Caco-2 (cell line): ENCODE measurements at regions of chr6 and their contacts with region 1.

Region 1: GRCh38 chr6:134888316-134888715 is 61.6 kb downstream of the ALDH8A1 start:
- DNase-seq: no peak
- H3K4me3 ChIP-seq: no peak overlapping the region
- H3K4me3 Mint-ChIP-seq: no peak overlapping the region
- H3K27ac Mint-ChIP-seq: no peak overlapping the region
- H3K4me1 ChIP-seq: no peaks in the 10 kb centered on the region; the same call in 1 of the 2 replicates
- H3K4me1 Mint-ChIP-seq: no peaks in the 10 kb centered on the region
- H3K27me3 ChIP-seq: no peaks in the 10 kb centered on the region
- H3K27me3 Mint-ChIP-seq: no peaks in the 10 kb centered on the region
- CTCF ChIP-seq: no peak

Region 2: GRCh38 chr6:134853111-134854055 is 34.9 kb before region 1 on chr6:
- CTCF ChIA-PET with region 1: no interaction called
- POLR2A ChIA-PET with region 1: no interaction called
- intact Hi-C with region 1: no loop called
- DNase-seq: peak; percentile 20 to 71
- H3K4me3 ChIP-seq: no peak overlapping the region
- H3K4me3 Mint-ChIP-seq: no peak overlapping the region
- H3K27ac Mint-ChIP-seq: no peak overlapping the region
- H3K4me1 ChIP-seq: peaks cover 26% of the 10 kb centered on the region
- H3K4me1 Mint-ChIP-seq: peaks cover 11% of the 10 kb centered on the region
- H3K27me3 ChIP-seq: no peaks in the 10 kb centered on the region
- H3K27me3 Mint-ChIP-seq: no peaks in the 10 kb centered on the region
- CTCF ChIP-seq: no peak

Region 3: GRCh38 chr6:134863771-134864510 is 24.4 kb before region 1 on chr6:
- CTCF ChIA-PET with region 1: no interaction called
- POLR2A ChIA-PET with region 1: no interaction called
- intact Hi-C with region 1: no loop called
- DNase-seq: no peak
- H3K4me3 ChIP-seq: no peak overlapping the region
- H3K4me3 Mint-ChIP-seq: no peak overlapping the region
- H3K27ac Mint-ChIP-seq: no peak overlapping the region
- H3K4me1 ChIP-seq: peaks cover 9% of the 10 kb centered on the region
- H3K4me1 Mint-ChIP-seq: peaks cover 7% of the 10 kb centered on the region
- H3K27me3 ChIP-seq: no peaks in the 10 kb centered on the region
- H3K27me3 Mint-ChIP-seq: no peaks in the 10 kb centered on the region
- CTCF ChIP-seq: no peak

Region 4: DNA sequence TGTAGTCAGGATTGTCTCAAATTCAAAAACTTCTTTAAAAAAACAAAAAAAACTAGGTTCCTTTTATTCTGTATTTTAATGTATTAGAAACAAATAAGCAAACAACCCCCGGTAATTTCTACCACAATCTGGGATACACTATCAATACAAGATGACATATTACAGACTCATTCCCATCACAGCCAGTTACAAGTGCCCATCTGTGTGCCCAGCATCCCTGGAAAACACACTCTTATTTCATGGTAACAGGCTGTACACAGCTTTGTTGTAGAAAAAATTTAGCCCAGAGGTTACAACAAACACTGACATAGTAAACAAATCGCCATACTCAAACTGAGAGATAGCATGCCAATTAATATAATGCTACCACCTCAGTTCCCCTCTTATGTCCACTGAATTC is 150.0 kb after region 1 on chr6:
- CTCF ChIA-PET with region 1: no interaction called
- POLR2A ChIA-PET with region 1: no interaction called
- intact Hi-C with region 1: loop called (anchors 2 kb)
- DNase-seq: no peak
- H3K4me3 ChIP-seq: no peak overlapping the region
- H3K4me3 Mint-ChIP-seq: no peak overlapping the region
- H3K27ac Mint-ChIP-seq: no peak overlapping the region
- H3K4me1 ChIP-seq: no peaks in the 10 kb centered on the region
- H3K4me1 Mint-ChIP-seq: no peaks in the 10 kb centered on the region
- H3K27me3 ChIP-seq: no peaks in the 10 kb centered on the region
- H3K27me3 Mint-ChIP-seq: no peaks in the 10 kb centered on the region
- CTCF ChIP-seq: no peak